Dorsolateral prefrontal cortex (tissue), 120 donors: ENCODE measurements at regions of chr1 and their contacts with region 1.

Region 1: DNA sequence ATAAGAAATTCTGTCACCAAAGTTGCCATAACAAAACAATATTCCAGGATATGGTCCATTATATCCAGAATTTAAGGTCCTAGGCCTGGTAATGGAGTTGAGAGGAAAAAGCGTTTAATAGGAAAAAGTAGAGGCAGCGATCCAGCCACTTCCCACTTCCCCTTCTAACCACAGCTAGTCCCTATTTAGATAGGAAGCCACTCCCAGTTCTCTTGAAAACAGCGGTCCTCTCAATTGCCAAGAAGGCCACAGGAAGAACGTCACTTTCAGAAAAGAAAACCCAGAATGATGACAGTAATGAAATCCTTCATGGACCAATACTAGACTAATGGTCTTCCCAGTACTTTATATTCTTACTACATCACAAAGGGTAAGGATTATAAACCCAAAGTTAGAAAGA is 38.6 kb downstream of the ABL2 start:
- DNase-seq: no peak
- H3K4me3 ChIP-seq: no peak overlapping the region
- H3K27ac ChIP-seq: peak overlapping the region in 5 of 59 donors; percentile 5 to 48 (median 41)
- H3K27me3 ChIP-seq: no peaks in the 10 kb centered on the region
- CTCF ChIP-seq: no peak

Region 2: DNA sequence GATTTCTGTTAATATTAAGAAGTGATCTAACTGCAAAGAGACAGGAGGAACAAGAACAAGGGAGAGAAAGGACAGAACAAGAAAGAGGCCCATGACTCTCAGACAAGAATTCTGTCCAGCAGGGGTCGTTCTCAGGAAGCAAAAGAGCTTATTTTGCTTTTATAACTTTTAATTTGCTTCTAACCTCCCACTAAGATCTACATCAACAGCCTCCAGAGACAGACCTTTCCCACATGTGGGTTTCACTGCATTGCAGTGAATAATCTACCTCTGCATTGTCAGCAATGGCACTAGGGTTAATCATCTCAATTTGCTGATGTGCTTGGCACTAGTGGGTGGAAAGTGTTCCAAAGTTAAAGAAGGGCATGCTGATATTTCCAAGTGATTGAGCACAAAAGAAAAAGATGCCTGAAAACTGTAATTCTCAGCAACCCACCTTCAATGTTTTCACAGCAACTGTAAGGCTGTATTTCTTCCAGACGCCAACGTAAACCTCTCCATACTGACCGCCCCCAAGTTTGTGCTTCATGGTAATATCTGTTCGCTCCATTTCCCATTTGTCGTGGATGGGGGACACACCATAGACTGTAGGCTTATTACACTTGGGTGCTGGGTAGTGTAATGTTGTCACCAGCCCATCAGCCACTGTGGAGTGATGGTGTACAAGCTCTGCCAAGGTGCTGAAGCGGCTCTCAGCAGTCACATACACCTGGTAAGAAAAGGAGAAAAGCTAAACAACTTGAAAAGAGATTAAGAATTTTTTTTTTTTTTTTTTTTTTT is 69.5 kb before region 1 on chr1:
- intact Hi-C with region 1: loop called in 1 of 2 experiments (anchors 2 kb)
- DNase-seq: no peak
- H3K4me3 ChIP-seq: no peak overlapping the region
- H3K27ac ChIP-seq: peak overlapping the region in 4 of 59 donors; percentile 3 to 59 (median 14)
- H3K27me3 ChIP-seq: no peaks in the 10 kb centered on the region
- CTCF ChIP-seq: peak; percentile 41 to 82 (median 68)

Region 3: GRCh38 chr1:179137623-179138255 is 53.1 kb before region 1 on chr1:
- intact Hi-C with region 1: no loop called
- DNase-seq: no peak
- H3K4me3 ChIP-seq: no peak overlapping the region
- H3K27ac ChIP-seq: no peak overlapping the region
- H3K27me3 ChIP-seq: no peaks in the 10 kb centered on the region
- CTCF ChIP-seq: no peak